ENCODE measurements at regions of chr6 and their contacts with region 1.

Region 1: GRCh38 chr6:41683510-41684310 is 45.4 kb downstream of the MDFI start:
- DNase-seq: peak; percentile 87
- ATAC-seq: peak; percentile 93
- H3K4me3 Mint-ChIP-seq: peak overlapping the region; percentile 70
- H3K27ac Mint-ChIP-seq: peak overlapping the region; percentile 68
- H3K4me1 Mint-ChIP-seq: peaks cover 5% of the 10 kb centered on the region
- H3K27me3 Mint-ChIP-seq: peaks cover 1% of the 10 kb centered on the region
- CTCF ChIP-seq: peak; percentile 86

Region 2: GRCh38 chr6:41700463-41701347 is 17.0 kb after region 1 on chr6:
- CTCF ChIA-PET with region 1: interaction called, 21 read pairs
- POLR2A ChIA-PET with region 1: interaction called, 4 read pairs
- intact Hi-C with region 1: no loop called
- DNase-seq: no peak
- ATAC-seq: no peak
- H3K4me3 Mint-ChIP-seq: no peak overlapping the region
- H3K27ac Mint-ChIP-seq: no peak overlapping the region
- H3K4me1 Mint-ChIP-seq: peaks cover 4% of the 10 kb centered on the region
- H3K27me3 Mint-ChIP-seq: no peaks in the 10 kb centered on the region
- CTCF ChIP-seq: no peak

Region 3: DNA sequence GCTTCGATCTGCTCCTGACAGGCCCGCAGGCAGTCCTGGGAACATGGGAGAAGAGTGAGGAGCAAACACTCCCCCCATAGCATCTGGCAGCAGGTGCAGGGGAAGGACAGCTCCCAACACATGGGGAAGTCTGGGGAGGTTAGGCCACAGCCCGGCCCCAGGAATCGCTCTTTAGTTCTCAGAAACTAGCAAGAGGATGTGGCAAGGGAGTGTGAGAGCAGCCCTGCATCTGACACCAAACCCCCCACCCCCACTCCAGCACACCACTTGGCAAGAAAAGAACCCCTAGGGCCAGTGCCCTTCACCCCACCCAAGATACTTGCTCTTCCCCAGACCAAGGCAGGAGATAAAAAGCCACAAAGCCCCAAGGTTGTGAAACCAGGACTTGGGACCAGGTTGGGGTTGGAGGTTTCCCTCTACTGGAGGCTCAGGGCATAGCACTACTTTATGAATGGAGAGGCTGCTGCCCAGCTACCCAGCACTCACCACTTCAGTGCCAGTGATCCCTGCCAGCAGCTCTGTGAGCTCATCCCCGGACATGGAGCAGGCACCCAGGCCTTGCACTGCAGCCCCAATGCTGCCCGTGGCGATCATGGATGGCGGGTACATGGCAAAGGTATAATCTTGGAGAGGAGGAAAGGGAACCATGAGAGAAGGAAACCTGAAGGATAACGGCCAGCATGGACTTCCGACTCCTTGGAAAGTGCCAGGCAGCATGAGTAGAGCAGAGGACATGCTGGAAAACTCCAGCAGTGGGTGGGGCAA is 252.5 kb after region 1 on chr6:
- CTCF ChIA-PET with region 1: no interaction called
- POLR2A ChIA-PET with region 1: no interaction called
- intact Hi-C with region 1: no loop called
- DNase-seq: peak; percentile 97
- ATAC-seq: peak; percentile 83
- H3K4me3 Mint-ChIP-seq: peak overlapping the region; percentile 90
- H3K27ac Mint-ChIP-seq: peak overlapping the region; percentile 91
- H3K4me1 Mint-ChIP-seq: peaks cover 50% of the 10 kb centered on the region
- H3K27me3 Mint-ChIP-seq: no peaks in the 10 kb centered on the region
- CTCF ChIP-seq: peak; percentile 86